ENCODE measurements at regions of chr19 and their contacts with region 1.

Region 1: DNA sequence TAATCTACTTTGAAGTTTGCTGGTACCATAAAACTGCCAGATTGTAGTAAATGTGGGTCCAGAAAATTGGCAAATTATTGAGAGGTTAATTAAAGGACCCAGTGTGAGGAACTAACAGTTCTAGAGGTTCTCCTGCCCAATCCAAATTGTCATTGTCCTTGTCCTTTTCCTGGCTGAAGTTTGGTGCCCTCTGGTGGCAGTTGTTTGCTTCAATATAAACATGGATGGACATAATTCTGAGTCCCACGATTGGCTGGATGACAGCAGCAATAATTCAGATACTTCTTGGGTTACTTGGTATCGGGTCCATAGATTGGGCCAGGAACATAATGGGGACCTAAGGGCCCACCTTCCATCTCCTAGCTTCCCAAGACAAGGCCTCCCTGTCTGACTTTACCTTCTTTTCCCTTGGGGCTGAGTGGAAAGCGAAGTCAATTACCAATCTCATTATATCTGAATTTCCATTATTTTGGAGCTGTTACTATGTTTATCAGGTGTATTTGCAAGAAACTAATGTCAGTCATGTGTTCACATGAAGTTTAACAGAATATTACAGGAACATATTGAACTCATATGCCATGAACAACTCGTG is 33.8 kb upstream of the GARRE1 start:
- DNase-seq: peak in 1 of 2 experiments; percentile 73
- H3K4me3 ChIP-seq: no peak overlapping the region
- H3K27ac ChIP-seq: no peak overlapping the region
- H3K4me1 ChIP-seq: peaks cover 8 to 13% (median 11%) of the 10 kb centered on the region in 4 experiments
- H3K27me3 ChIP-seq: no peaks in the 10 kb centered on the region
- CTCF ChIP-seq: peak; percentile 1 to 77 (median 54)
- EP300 ChIP-seq: no peak
- POLR2A ChIP-seq: no peak
- RAD21 ChIP-seq: peak; percentile 50 to 61

Region 2: DNA sequence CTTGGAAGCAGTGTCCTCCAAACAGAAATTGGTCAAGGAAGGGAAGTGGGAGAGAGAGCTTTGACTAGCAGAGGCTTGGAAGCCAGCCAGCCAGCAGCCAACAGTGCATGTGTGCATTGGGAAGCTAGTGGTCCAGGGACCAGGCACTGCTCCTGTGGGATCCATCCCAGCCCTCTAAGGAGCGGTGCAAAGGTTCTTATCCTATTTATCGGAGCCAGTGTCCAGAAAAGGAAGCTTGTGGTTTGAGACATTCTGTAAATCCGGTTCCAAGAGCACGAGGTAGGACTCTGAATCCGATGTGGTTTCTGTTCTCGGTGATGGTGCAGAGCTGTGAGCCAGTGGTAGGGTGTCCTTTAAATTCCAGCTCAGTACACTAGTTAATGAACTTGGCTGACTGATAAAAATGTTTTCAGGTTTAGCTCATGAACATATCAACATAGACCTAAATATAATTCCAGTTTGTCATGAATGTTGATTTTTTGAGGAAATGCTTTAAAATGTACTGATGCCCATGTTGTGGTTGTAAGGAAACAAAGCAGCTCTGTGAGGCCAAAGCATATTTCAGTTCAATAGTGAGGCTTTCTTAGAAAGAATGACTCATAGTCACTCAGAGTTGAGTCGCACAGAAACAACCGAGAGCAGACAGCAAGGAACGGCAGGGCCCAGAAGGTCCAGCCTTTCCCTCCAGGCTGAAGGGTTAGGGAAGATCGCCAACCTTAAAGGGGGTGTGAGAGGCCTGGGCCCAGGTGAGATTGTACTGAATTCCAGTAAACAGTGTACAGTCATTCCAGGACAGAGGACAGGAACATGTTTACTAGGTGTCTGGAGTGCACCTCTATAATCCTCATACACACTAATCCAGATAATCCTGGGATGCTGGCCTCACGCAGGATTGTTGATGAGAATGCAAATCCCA is 12.3 kb after region 1 on chr19:
- CTCF ChIA-PET with region 1: interaction called, 14 read pairs
- POLR2A ChIA-PET with region 1: interaction called, 11 read pairs
- DNase-seq: no peak
- H3K4me3 ChIP-seq: no peak overlapping the region
- H3K27ac ChIP-seq: no peak overlapping the region
- H3K4me1 ChIP-seq: peaks cover 2 to 9% (median 6%) of the 10 kb centered on the region in 4 experiments; a peak in 4 of 7 replicates
- H3K27me3 ChIP-seq: no peaks in the 10 kb centered on the region
- CTCF ChIP-seq: no peak
- EP300 ChIP-seq: no peak
- POLR2A ChIP-seq: no peak
- RAD21 ChIP-seq: no peak